ENCODE measurements at regions of chr6 and their contacts with region 1.

Region 1: DNA sequence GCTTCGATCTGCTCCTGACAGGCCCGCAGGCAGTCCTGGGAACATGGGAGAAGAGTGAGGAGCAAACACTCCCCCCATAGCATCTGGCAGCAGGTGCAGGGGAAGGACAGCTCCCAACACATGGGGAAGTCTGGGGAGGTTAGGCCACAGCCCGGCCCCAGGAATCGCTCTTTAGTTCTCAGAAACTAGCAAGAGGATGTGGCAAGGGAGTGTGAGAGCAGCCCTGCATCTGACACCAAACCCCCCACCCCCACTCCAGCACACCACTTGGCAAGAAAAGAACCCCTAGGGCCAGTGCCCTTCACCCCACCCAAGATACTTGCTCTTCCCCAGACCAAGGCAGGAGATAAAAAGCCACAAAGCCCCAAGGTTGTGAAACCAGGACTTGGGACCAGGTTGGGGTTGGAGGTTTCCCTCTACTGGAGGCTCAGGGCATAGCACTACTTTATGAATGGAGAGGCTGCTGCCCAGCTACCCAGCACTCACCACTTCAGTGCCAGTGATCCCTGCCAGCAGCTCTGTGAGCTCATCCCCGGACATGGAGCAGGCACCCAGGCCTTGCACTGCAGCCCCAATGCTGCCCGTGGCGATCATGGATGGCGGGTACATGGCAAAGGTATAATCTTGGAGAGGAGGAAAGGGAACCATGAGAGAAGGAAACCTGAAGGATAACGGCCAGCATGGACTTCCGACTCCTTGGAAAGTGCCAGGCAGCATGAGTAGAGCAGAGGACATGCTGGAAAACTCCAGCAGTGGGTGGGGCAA is 5.4 kb downstream of the CCND3 start:
- DNase-seq: peak; percentile 91
- ATAC-seq: peak; percentile 74
- H3K4me3 ChIP-seq: no peak overlapping the region
- H3K27ac ChIP-seq: no peak overlapping the region
- H3K4me1 ChIP-seq: peaks cover 26% of the 10 kb centered on the region
- H3K27me3 ChIP-seq: no peaks in the 10 kb centered on the region
- CTCF ChIP-seq: peak; percentile 87

Region 2: DNA sequence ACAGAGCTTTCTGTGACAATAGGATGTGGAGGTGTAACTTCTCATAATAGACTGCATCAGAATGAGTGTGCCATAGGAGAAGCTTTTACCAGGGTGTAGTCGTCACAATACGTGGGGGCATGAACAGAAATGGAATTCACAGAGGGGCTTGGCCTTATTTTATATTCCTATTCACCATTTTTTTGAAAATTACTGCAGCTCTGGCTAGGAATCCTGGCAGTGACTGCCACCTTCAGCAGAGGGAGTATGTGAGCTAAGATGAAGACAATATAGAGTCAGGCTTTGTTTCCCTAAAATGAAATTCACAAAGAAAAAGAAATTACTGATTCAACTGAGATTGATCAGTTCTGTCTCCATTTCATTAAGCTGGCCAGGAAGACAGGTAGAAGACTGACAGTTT is 134.9 kb before region 1 on chr6:
- CTCF ChIA-PET with region 1: interaction called, 6 read pairs
- POLR2A ChIA-PET with region 1: no interaction called
- intact Hi-C with region 1: loop called (anchors 1 kb)
- DNase-seq: peak; percentile 55
- ATAC-seq: peak; percentile 73
- H3K4me3 ChIP-seq: no peak overlapping the region
- H3K27ac ChIP-seq: no peak overlapping the region
- H3K4me1 ChIP-seq: no peaks in the 10 kb centered on the region
- H3K27me3 ChIP-seq: no peaks in the 10 kb centered on the region
- CTCF ChIP-seq: peak; percentile 80

Region 3: DNA sequence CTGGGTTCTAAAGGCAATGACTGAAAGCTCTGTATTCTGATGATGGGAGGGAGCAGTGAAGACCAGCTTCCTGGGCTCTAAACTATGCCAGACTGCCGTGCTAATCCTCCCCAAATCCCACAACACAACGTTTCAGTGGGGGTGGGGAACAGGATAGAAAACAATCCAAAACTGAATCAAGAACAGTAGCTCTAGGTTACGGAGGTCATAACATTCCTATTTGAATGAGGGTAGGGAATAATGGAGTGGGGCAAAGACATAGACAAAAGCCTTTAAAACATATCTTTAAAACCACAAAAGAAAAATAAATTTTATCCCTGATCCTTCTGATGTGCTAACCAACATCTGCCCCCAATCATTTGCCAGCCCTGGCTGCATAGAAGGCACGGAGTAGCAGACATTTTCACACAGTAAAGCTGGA is 48.9 kb before region 1 on chr6:
- CTCF ChIA-PET with region 1: no interaction called
- POLR2A ChIA-PET with region 1: no interaction called
- intact Hi-C with region 1: no loop called
- DNase-seq: no peak
- ATAC-seq: no peak
- H3K4me3 ChIP-seq: no peak overlapping the region
- H3K27ac ChIP-seq: no peak overlapping the region
- H3K4me1 ChIP-seq: no peaks in the 10 kb centered on the region
- H3K27me3 ChIP-seq: no peaks in the 10 kb centered on the region
- CTCF ChIP-seq: no peak

Measured in PC-3 (cell line).